MCF 10A (cell line): ENCODE measurements at regions of chr9 and their contacts with region 1.

Region 1: DNA sequence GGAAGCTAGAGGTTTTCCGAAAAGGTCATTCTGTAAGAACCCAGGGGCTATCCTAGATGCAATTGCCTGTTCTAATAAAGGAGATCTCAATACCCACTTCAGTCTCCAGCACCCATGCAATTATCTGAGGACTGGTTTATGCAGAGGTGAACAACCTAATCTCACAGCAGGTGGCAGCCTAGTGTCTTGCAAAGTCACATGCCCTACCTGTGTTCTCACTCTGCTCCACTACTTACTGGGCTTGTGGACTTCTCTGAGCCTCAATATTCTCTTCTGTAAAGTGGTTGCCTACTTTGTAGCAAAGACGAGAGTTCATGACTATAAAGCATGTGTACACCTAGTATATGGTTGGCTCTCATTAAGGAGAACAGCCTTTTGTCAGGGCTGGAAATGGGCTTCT is 21.0 kb upstream of the ALDH1B1 start:
- DNase-seq: peak; percentile 68
- H3K4me3 Mint-ChIP-seq: no peak overlapping the region
- H3K27ac Mint-ChIP-seq: no peak overlapping the region
- H3K4me1 Mint-ChIP-seq: no peaks in the 10 kb centered on the region
- H3K27me3 Mint-ChIP-seq: peaks cover 12% of the 10 kb centered on the region
- CTCF ChIP-seq: peak; percentile 59

Region 2: DNA sequence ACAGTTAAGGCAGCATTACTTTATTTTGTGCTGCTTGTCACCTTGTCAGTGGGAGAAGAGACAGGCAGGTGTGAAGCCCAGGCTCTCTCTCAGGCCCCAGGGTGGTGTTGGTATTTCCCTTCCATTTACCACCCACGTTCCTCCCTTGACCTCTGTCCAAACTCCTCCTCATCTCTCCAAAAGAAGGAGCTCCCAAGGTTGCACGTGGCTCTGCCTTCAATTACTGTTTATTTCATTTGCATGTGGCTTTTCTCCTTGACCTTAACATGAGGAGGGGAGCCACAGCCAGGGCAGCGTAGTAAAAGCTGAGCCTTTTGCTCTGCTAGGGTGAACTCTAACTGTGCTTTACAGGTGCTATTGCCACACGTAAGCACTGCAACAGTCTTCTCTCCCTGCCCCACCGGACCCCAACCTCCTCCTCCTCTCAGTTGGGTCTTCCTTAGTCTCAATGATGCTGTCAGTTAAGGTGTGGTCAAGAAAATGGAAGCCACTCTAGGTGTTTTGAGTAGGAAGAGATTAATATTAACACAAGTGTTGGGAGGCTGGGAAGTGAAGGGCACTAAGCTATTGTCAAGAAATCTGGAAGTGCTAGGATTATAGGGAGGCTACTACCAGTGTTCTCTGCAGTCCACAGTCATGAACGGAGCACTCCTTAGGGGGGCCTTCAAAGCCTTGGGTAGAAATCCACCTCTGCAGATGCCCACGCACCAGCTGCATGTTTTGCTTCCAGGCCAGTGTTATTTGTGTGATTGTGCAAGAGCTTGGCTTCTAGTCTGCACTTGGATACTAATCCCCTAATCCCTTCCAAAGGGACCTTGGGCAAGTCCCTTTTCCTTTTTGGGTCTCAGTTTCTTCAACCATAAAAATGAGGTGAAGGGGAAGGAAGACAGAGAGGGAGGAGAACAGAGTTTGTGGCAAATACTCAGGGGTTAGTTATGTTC is 17.1 kb after region 1 on chr9:
- CTCF ChIA-PET with region 1: interaction called, 10 read pairs
- POLR2A ChIA-PET with region 1: interaction called, 4 read pairs
- intact Hi-C with region 1: no loop called
- DNase-seq: peak; percentile 48
- H3K4me3 Mint-ChIP-seq: no peak overlapping the region
- H3K27ac Mint-ChIP-seq: no peak overlapping the region
- H3K4me1 Mint-ChIP-seq: peaks cover 13% of the 10 kb centered on the region
- H3K27me3 Mint-ChIP-seq: no peaks in the 10 kb centered on the region
- CTCF ChIP-seq: no peak

Region 3: DNA sequence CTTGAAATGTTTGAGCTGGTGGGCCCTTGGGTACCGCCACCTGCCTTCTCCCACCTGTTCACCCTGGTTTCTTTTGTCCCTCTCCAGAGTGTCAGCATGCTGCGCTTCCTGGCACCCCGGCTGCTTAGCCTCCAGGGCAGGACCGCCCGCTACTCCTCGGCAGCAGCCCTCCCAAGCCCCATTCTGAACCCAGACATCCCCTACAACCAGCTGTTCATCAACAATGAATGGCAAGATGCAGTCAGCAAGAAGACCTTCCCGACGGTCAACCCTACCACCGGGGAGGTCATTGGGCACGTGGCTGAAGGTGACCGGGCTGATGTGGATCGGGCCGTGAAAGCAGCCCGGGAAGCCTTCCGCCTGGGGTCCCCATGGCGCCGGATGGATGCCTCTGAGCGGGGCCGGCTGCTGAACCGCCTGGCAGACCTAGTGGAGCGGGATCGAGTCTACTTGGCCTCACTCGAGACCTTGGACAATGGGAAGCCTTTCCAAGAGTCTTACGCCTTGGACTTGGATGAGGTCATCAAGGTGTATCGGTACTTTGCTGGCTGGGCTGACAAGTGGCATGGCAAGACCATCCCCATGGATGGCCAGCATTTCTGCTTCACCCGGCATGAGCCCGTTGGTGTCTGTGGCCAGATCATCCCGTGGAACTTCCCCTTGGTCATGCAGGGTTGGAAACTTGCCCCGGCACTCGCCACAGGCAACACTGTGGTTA is 24.3 kb after region 1 on chr9:
- CTCF ChIA-PET with region 1: interaction called, 32 read pairs
- POLR2A ChIA-PET with region 1: interaction called, 4 read pairs
- intact Hi-C with region 1: loop called (anchors 1 kb)
- DNase-seq: no peak
- H3K4me3 Mint-ChIP-seq: no peak overlapping the region
- H3K27ac Mint-ChIP-seq: no peak overlapping the region
- H3K4me1 Mint-ChIP-seq: peaks cover 10% of the 10 kb centered on the region
- H3K27me3 Mint-ChIP-seq: no peaks in the 10 kb centered on the region
- CTCF ChIP-seq: no peak

Region 4: DNA sequence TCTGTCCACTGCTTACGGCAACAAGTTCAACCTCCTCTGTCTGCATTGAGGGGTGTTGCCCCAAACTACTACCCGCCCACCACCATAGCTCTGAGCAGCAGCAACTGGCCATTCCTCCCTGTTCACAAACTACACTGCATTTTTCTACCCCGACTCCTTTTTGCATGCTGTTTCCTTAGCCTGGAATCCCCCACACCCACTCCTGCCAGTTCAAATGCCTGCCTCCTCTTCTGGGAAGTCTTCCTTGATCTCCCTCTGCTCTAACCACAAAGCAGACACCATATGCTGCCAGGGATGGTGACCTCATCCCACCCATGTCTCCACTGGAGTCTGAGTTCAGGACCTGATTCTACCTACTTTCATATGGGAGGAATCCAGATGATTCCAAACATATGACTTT is 34.3 kb after region 1 on chr9:
- CTCF ChIA-PET with region 1: interaction called, 32 read pairs
- POLR2A ChIA-PET with region 1: no interaction called
- intact Hi-C with region 1: loop called (anchors 1 kb)
- DNase-seq: no peak
- H3K4me3 Mint-ChIP-seq: no peak overlapping the region
- H3K27ac Mint-ChIP-seq: no peak overlapping the region
- H3K4me1 Mint-ChIP-seq: no peaks in the 10 kb centered on the region
- H3K27me3 Mint-ChIP-seq: peaks cover 51% of the 10 kb centered on the region
- CTCF ChIP-seq: no peak

Region 5: GRCh38 chr9:38432922-38433510 is 61.5 kb after region 1 on chr9:
- CTCF ChIA-PET with region 1: interaction called, 17 read pairs
- POLR2A ChIA-PET with region 1: no interaction called
- intact Hi-C with region 1: loop called (anchors 2 kb)
- DNase-seq: peak; percentile 49
- H3K4me3 Mint-ChIP-seq: no peak overlapping the region
- H3K27ac Mint-ChIP-seq: no peak overlapping the region
- H3K4me1 Mint-ChIP-seq: no peaks in the 10 kb centered on the region
- H3K27me3 Mint-ChIP-seq: peaks cover 5% of the 10 kb centered on the region
- CTCF ChIP-seq: peak; percentile 43